IMR-90 (cell line): ENCODE measurements at regions of chr9 and their contacts with region 1.

Region 1: DNA sequence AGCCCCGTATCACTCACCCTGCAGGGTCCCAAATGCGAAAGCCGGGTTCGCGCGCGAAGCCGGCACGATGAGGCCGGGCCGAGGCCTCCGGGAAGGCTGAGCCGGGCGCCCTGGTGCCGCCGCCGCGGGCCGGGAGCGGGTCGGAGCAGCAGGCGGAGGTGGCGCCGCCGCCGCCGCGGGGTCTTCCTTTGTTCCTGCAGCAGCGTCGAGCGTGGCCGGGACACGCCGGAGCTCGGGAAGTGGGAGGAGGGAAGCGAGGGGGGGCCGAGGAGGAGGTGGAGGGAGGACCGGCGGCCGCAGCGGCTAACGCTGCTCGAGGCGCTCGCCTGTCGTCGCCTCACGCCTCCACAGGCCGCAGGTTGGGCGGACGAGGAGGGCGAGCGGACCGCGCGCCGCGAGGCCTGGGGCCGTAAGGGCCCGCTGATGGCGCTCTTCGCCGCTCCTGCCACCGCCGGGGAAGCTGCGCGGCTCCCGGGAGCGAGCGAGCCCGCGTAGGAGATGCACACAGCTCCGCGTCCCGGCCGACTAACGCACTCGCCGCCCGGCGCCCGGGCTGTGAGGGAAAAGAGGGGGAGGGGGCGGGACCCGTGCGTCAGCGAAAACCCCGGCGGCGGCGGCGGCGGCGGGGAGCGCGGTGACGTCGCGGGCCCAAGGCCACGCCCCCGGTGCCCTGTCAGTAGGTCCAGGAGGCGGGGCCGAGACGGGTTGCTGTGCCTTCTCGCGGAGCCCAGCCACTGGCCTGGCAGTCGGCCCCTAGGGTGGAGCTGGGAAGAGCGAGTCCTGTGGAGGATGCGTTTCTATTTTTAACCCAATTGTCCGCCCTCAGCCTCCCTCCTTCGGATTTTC is at the start of gene ZFAND5:
- DNase-seq: peak; percentile 98
- ATAC-seq: peak; percentile 90
- H3K4me3 ChIP-seq: peak within 1 kb of the TSS; percentile 99
- H3K27ac ChIP-seq: peak within 1 kb of the TSS; percentile 93
- H3K4me1 ChIP-seq: peaks cover 2% of the 10 kb centered on the region; the same call in 1 of the 2 replicates
- H3K27me3 ChIP-seq: no peaks in the 10 kb centered on the region
- CTCF ChIP-seq: peak; percentile 26; the same call in 1 of the 2 replicates
- POLR2A ChIP-seq: peak; percentile 99
- RAD21 ChIP-seq: peak; percentile 52
- total RNA-seq, gene ZFAND5: 35.8 and 53.3 TPM in 2 replicates

Region 2: GRCh38 chr9:72169178-72169577 is 195.7 kb before region 1 on chr9:
- CTCF ChIA-PET with region 1: no interaction called
- POLR2A ChIA-PET with region 1: no interaction called
- dilution Hi-C with region 1: no loop called
- in situ Hi-C with region 1: no loop called
- intact Hi-C with region 1: no loop called
- DNase-seq: no peak
- ATAC-seq: no peak
- H3K4me3 ChIP-seq: no peak overlapping the region
- H3K27ac ChIP-seq: no peak overlapping the region
- H3K4me1 ChIP-seq: no peaks in the 10 kb centered on the region
- H3K27me3 ChIP-seq: no peaks in the 10 kb centered on the region
- CTCF ChIP-seq: no peak
- POLR2A ChIP-seq: no peak
- RAD21 ChIP-seq: no peak

Region 3: GRCh38 chr9:72349240-72349639 is 15.7 kb before region 1 on chr9:
- CTCF ChIA-PET with region 1: no interaction called
- POLR2A ChIA-PET with region 1: no interaction called
- dilution Hi-C with region 1: no loop called
- in situ Hi-C with region 1: no loop called
- intact Hi-C with region 1: no loop called
- DNase-seq: no peak
- ATAC-seq: no peak
- H3K4me3 ChIP-seq: no peak overlapping the region
- H3K27ac ChIP-seq: no peak overlapping the region
- H3K4me1 ChIP-seq: no peaks in the 10 kb centered on the region
- H3K27me3 ChIP-seq: no peaks in the 10 kb centered on the region
- CTCF ChIP-seq: no peak
- POLR2A ChIP-seq: no peak; the same call in 1 of the 2 replicates
- RAD21 ChIP-seq: no peak

Region 4: DNA sequence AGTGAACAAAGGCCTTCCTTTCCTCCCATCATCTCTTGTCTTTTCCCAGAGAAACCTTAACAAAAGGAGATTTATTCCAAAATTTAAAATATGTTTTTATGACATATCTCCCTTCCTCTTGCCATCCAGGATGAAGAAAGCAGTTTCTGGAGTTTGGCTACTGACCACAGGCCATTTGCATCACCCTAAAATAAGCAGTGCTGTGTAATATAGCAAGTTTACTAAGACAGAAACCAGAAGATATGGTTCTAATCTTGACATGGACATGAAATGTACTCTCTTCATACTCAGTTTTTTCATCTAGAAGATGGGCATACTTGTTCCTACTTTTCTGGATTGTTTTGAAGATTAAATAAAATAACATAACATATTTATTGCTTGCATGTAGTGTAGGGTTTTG is 50.3 kb after region 1 on chr9:
- CTCF ChIA-PET with region 1: no interaction called
- POLR2A ChIA-PET with region 1: no interaction called
- dilution Hi-C with region 1: no loop called
- in situ Hi-C with region 1: no loop called
- intact Hi-C with region 1: no loop called
- DNase-seq: no peak
- ATAC-seq: no peak
- H3K4me3 ChIP-seq: no peak overlapping the region
- H3K27ac ChIP-seq: no peak overlapping the region
- H3K4me1 ChIP-seq: no peaks in the 10 kb centered on the region
- H3K27me3 ChIP-seq: no peaks in the 10 kb centered on the region
- CTCF ChIP-seq: no peak
- POLR2A ChIP-seq: no peak
- RAD21 ChIP-seq: no peak

Region 5: GRCh38 chr9:72443855-72444254 is 79.0 kb after region 1 on chr9:
- CTCF ChIA-PET with region 1: no interaction called
- POLR2A ChIA-PET with region 1: interaction called, 7 read pairs
- dilution Hi-C with region 1: no loop called
- in situ Hi-C with region 1: no loop called
- intact Hi-C with region 1: loop called (anchors 2 kb)
- DNase-seq: no peak
- ATAC-seq: no peak
- H3K4me3 ChIP-seq: no peak overlapping the region
- H3K27ac ChIP-seq: peak overlapping the region; percentile 26; the same call in 1 of the 2 replicates
- H3K4me1 ChIP-seq: peaks cover 18% of the 10 kb centered on the region
- H3K27me3 ChIP-seq: no peaks in the 10 kb centered on the region
- CTCF ChIP-seq: no peak
- POLR2A ChIP-seq: no peak
- RAD21 ChIP-seq: no peak

Region 6: GRCh38 chr9:72533337-72533736 is 168.4 kb after region 1 on chr9:
- CTCF ChIA-PET with region 1: no interaction called
- POLR2A ChIA-PET with region 1: interaction called, 4 read pairs
- dilution Hi-C with region 1: no loop called
- in situ Hi-C with region 1: no loop called
- intact Hi-C with region 1: loop called (anchors 5 kb)
- DNase-seq: peak; percentile 49
- ATAC-seq: peak; percentile 17; the same call in 1 of the 2 replicates
- H3K4me3 ChIP-seq: no peak overlapping the region
- H3K27ac ChIP-seq: no peak overlapping the region
- H3K4me1 ChIP-seq: peaks cover 9% of the 10 kb centered on the region
- H3K27me3 ChIP-seq: no peaks in the 10 kb centered on the region
- CTCF ChIP-seq: no peak
- POLR2A ChIP-seq: no peak
- RAD21 ChIP-seq: no peak

Region 7: DNA sequence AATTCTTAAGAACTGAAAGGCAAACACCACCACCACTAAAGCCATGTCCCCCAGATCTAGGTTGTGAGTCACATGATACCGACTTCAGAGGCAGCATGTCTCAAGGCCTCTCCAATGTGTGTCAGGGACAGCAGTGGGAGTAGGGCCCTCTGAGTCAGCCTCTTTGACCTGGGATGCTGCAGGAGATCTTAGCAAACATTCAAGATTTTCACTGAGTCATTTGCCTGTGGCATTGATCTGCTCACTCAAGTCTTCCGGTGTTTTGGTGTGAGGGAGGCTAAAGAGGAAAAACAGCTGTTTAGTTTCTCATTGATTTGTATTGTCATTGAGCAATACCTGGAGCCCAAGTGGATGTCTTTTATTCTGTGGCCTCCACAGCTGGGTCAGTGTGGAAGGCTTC is 192.6 kb after region 1 on chr9:
- CTCF ChIA-PET with region 1: interaction called, 3 read pairs
- POLR2A ChIA-PET with region 1: interaction called, 10 read pairs
- dilution Hi-C with region 1: no loop called
- in situ Hi-C with region 1: no loop called
- intact Hi-C with region 1: loop called (anchors 1 kb)
- DNase-seq: peak; percentile 97
- ATAC-seq: peak; percentile 74
- H3K4me3 ChIP-seq: no peak overlapping the region
- H3K27ac ChIP-seq: peak overlapping the region; percentile 35; the same call in 1 of the 2 replicates
- H3K4me1 ChIP-seq: peaks cover 9% of the 10 kb centered on the region
- H3K27me3 ChIP-seq: no peaks in the 10 kb centered on the region
- CTCF ChIP-seq: no peak
- POLR2A ChIP-seq: no peak
- RAD21 ChIP-seq: peak; percentile 20; the same call in 1 of the 2 replicates

Region 8: DNA sequence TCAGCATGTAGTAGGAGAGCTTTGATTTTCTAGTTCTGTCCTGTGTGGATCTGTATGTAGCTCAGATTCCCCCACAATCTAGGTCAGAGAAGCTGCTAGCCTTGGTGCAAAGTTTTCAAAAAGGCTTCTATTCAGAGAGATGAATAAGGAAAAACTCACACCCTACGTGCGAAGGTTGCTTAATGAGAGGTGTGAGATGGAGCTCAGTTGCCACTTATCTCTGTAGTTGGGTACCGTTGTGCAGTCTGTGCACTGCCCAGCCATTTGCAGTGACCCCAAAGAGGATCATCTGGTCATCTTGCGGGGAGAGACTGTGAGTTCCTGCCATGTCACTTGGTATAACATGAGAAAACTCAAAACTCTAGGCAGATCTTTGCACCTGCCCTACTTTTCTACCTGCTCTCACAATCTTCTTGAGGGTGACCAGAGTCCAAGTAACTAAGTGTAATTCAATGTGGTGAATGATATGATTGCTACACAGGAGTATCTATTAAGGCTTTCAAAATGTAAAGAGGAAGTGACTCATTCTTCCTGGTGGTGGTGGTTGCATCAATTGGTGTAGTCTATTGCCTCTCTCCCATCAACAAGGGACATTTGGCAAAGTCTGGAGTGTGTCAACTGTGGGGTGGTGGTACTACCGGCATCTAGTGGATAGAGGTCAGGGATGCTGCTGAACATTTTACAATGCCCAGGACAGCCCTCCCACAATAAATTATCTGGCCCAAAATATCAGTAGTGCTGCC is 221.7 kb after region 1 on chr9:
- CTCF ChIA-PET with region 1: no interaction called
- POLR2A ChIA-PET with region 1: interaction called, 12 read pairs
- dilution Hi-C with region 1: no loop called
- in situ Hi-C with region 1: loop called (anchors 5 kb)
- intact Hi-C with region 1: no loop called
- DNase-seq: peak; percentile 90
- ATAC-seq: peak; percentile 36
- H3K4me3 ChIP-seq: no peak overlapping the region
- H3K27ac ChIP-seq: peak overlapping the region; percentile 91
- H3K4me1 ChIP-seq: peaks cover 18% of the 10 kb centered on the region
- H3K27me3 ChIP-seq: no peaks in the 10 kb centered on the region
- CTCF ChIP-seq: peak; percentile 37
- POLR2A ChIP-seq: no peak
- RAD21 ChIP-seq: peak; percentile 56

Region 9: DNA sequence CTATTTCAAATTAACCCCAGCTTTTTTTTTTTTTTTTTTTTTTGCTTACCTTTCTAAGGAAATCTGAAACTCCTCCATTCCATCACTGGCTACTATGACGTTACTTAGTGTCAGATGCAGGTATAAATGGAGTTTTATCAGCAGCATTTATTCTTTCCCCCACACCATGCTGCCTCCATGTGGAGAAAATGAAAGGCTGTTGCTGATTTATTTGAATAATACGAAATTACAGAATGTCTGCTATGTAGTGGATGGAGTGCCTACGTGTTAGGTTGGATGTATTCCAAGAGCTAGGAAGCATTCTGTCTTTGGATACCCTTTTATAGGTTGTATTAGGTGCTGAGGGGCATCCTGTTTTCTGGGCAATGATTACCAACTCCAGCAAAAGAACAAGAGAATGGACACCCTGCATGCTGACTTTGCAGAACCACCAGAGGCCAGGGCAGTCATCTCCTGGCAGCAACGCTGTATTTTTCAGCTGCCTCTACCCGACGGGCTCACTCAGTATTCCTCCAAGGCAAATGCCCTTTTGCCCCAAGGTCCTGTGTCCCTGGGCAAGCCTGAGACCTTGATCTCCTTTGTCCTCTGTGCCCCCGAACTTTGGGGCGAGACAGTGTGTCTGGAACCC is 388.5 kb after region 1 on chr9:
- CTCF ChIA-PET with region 1: no interaction called
- POLR2A ChIA-PET with region 1: no interaction called
- dilution Hi-C with region 1: no loop called
- in situ Hi-C with region 1: no loop called
- intact Hi-C with region 1: loop called (anchors 1 kb)
- DNase-seq: peak; percentile 31
- ATAC-seq: peak; percentile 60; the same call in 1 of the 2 replicates
- H3K4me3 ChIP-seq: no peak overlapping the region
- H3K27ac ChIP-seq: no peak overlapping the region
- H3K4me1 ChIP-seq: no peaks in the 10 kb centered on the region
- H3K27me3 ChIP-seq: peaks cover 4% of the 10 kb centered on the region
- CTCF ChIP-seq: peak; percentile 64
- POLR2A ChIP-seq: no peak
- RAD21 ChIP-seq: peak; percentile 73